ENCODE measurements at regions of chr4 and their contacts with region 1.

Region 1: DNA sequence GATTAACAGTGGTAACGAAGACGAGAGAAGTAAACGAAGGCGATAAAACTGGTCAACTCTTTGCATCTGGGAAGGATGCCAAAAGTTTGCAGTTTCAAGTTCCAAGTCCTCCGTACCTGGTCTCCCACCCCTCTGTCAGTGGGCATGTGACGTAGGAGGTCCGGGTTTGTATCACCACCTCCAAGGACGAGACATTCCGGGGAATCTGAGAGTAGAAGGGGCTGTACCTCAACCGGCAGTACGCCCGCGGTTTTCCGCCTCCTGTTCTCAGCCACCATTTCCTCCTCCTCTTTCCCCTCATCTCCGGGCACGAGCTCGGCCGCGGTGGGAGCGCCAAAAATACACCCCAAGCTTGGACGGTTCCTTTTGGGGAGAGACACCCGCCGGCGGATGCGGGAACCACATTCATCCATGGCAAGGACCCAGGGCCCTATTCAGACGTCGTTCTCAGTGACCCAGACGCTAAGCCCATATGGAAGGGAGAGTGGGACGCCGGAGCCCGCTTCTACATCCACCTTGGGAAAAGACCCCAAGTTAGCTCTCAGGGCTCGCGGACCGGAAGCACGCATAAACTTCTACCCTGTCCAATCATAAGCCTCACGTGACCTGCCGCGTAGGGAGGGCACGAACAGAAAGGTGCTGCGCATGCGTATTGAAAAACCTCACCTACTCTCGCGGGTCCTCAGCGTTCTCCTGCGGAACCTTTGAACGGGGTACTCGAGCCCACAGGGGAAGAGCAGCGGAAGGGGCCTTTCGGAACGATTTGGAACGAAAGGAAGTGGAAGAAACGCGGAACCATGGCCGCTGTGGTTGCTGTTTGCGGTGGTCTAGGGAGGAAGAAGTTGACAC is at the starts of genes HELQ and MRPS18C:
- DNase-seq: peak; percentile 97
- H3K4me3 ChIP-seq: peak within 1 kb of the TSS; percentile 66 to 88 (median 74)
- H3K27ac ChIP-seq: peak within 1 kb of the TSS; percentile 95 to 98 (median 96)
- H3K4me1 ChIP-seq: peaks cover 0 to 29% (median 22%) of the 10 kb centered on the region in 4 donors
- H3K27me3 ChIP-seq: no peaks in the 10 kb centered on the region
- CTCF ChIP-seq: peak in 4 of 5 experiments; percentile 21 to 56 (median 36)
- EP300 ChIP-seq: no peak
- POLR2A ChIP-seq: peak; percentile 83
- total RNA-seq, gene HELQ: 2.6 to 19.1 (median 7.4) TPM
- total RNA-seq, gene MRPS18C: 10.7 to 32.2 (median 16.5) TPM

Region 2: DNA sequence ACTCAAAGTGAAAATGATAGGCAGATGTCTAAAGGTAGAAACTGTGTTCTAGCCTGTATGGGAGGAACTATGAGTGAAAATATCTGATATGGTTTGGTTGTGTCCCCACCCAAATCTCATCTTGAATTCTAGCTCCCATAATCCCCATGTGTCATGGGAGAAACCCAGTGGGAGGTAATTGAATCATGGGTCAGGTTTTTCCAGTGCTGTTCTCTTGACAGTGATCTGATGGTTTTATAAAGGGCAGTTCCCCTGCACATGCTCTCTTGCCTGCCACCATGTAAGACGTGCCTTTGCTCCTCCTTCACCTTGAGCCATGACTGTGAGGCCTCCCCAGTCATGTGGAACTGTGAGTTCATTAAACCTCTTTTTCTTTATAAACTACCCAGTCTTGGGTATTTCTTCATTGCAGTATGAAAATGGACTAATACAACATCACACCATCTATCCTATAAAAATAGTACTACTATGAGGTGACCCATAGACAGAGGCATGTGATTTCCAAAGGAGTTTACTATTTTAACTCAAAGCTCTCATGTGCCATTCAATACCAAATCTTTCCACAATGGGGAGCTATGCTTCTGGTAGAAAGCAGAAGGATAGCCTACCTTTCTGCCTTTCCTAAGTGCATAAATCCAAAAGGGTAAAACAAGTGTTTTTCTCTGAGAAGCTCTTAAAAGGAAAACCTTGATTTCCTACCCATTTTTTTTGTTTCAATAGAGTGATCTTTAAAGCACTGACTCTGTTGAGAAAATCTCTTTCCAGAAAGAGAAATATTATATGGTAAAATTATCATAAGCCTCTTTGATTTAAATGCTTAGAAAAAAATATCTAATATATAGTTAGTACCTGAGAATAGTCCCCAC is 603.4 kb before region 1 on chr4:
- in situ Hi-C with region 1: loop called in 2 of 4 experiments (anchors 25 kb)
- intact Hi-C with region 1: no loop called
- DNase-seq: no peak
- H3K4me3 ChIP-seq: no peak overlapping the region
- H3K27ac ChIP-seq: no peak overlapping the region
- H3K4me1 ChIP-seq: no peaks in the 10 kb centered on the region
- H3K27me3 ChIP-seq: no peaks in the 10 kb centered on the region
- CTCF ChIP-seq: peak in 4 of 5 experiments; percentile 28 to 42 (median 38)
- EP300 ChIP-seq: no peak
- POLR2A ChIP-seq: no peak

Region 3: GRCh38 chr4:83284193-83285054 is 171.1 kb before region 1 on chr4 and contains the start of gene COQ2:
- in situ Hi-C with region 1: loop called in 1 of 4 experiments (anchors 10 kb)
- intact Hi-C with region 1: no loop called
- DNase-seq: peak; percentile 97
- H3K4me3 ChIP-seq: peak within 1 kb of the TSS; percentile 37 to 80 (median 60)
- H3K27ac ChIP-seq: peak within 1 kb of the TSS; percentile 92 to 96 (median 93)
- H3K4me1 ChIP-seq: peaks cover 5 to 37% (median 20%) of the 10 kb centered on the region in 4 donors
- H3K27me3 ChIP-seq: no peaks in the 10 kb centered on the region
- CTCF ChIP-seq: peak; percentile 14 to 55 (median 24)
- EP300 ChIP-seq: no peak
- POLR2A ChIP-seq: peak; percentile 53
- total RNA-seq, gene COQ2: 0.75 to 14.4 (median 12.2) TPM

Region 4: GRCh38 chr4:83618431-83618830 is 162.9 kb after region 1 on chr4:
- in situ Hi-C with region 1: no loop called
- intact Hi-C with region 1: no loop called
- DNase-seq: peak; percentile 50
- H3K4me3 ChIP-seq: no peak overlapping the region
- H3K27ac ChIP-seq: peak overlapping the region; percentile 57 to 72 (median 68)
- H3K4me1 ChIP-seq: peaks cover 8 to 32% (median 26%) of the 10 kb centered on the region in 4 donors
- H3K27me3 ChIP-seq: no peaks in the 10 kb centered on the region
- CTCF ChIP-seq: no peak
- EP300 ChIP-seq: no peak
- POLR2A ChIP-seq: no peak